AG04449 (cell line): ENCODE measurements at regions of chr14 and their contacts with region 1.

Region 1: DNA sequence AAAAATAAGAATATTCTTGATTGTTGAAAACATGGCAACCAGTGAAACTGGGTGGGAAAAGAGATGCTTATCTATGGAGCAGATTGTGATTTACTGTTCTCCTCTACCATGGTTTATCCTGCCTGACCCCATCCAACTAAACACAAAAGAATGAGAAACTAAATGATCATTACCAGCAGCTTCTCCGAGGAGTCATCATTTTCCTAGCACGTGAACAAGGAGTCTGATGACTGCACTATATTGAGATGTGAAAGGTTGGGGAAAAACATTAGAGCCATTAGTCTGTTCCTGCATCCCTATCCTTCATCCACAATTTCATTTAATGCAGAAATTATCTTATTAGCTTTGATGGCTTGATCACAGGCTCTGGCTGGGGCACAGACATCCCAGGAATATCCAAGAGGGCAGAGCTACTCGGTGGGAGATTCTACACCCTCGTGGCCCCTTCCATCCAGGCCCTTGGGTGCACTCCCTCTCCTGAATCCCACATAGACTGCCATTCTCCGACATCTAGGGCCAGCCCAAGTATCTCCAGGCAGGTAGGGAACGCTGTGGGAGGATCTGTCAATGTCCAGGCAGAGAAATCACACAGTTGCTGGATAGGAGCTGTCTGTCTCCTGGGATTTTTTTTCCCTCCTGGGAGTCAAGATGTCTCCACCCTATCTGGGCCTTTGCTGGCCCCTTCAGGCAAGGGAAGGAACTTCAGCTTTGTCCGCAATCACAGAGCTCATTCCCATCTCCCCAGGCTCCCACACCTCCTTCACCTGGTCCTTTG is 43.3 kb upstream of the DHRS4 start:
- DNase-seq: peak; percentile 33
- H3K4me3 ChIP-seq: no peak overlapping the region
- CTCF ChIP-seq: peak; percentile 80

Region 2: DNA sequence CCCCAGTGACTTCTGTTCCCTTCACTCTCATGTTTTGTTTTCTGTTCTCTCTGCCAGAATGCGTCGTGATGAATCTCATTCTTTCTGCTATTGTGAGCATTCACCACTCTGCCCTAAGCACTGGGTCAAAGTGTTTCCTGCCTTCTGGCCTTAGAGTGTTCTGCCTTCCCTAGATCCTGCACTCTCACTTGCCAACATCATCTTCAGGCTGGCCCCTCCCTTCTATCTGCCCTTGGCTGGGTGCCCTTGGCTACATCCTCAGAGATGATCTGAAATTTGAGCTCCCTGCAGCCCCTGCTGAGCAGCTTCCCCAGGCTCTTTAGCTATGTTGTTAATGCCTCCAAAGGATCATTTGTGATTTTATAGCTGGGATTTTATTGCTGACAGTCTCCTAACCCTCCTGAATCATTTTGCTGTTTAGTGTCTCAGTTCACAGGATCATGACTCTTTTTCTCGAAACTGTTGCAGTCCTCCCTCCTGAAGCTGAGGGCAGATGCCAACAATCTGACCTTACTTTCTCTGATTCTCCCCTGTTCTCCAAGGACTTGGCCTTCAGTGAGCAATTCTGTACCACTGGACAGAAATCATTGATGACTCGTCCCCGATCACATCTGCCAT is 269.7 kb before region 1 on chr14:
- CTCF ChIA-PET with region 1: interaction called, 125 read pairs
- POLR2A ChIA-PET with region 1: no interaction called
- DNase-seq: peak; percentile 53
- H3K4me3 ChIP-seq: no peak overlapping the region
- CTCF ChIP-seq: no peak

Region 3: GRCh38 chr14:23727566-23728335 is 182.5 kb before region 1 on chr14:
- CTCF ChIA-PET with region 1: interaction called, 97 read pairs
- POLR2A ChIA-PET with region 1: no interaction called
- DNase-seq: no peak
- H3K4me3 ChIP-seq: no peak overlapping the region
- CTCF ChIP-seq: peak; percentile 19

Region 4: DNA sequence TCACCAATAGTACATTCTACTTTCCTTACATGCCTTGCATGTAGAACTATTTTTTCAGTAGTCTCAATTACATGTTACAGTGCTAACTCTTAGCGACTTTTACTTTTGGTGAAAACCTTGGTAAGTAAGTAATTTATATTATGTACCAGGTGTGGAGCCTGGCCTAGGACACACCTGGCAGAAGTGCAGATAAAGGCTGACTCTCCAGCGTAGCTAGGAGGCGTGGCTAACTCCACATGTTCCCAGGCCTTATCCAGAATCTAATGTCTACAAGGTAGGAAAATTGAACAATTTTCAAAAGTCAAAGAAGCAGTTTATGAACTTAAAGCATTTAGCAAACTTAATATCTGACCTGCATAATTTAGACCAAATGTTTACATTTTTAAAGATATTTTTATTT is 116.8 kb before region 1 on chr14:
- CTCF ChIA-PET with region 1: no interaction called
- POLR2A ChIA-PET with region 1: no interaction called
- DNase-seq: no peak
- H3K4me3 ChIP-seq: no peak overlapping the region
- CTCF ChIP-seq: no peak

Region 5: GRCh38 chr14:23922545-23922944 is 12.3 kb after region 1 on chr14:
- CTCF ChIA-PET with region 1: interaction called, 20 read pairs
- POLR2A ChIA-PET with region 1: no interaction called
- DNase-seq: no peak
- H3K4me3 ChIP-seq: no peak overlapping the region
- CTCF ChIP-seq: no peak